ENCODE measurements at regions of chr11 and their contacts with region 1.

Region 1: GRCh38 chr11:13962562-13963168 is at the start of gene SPON1:
- ATAC-seq: peak in 7 of 8 experiments; percentile 38 to 92 (median 90)
- H3K4me3 ChIP-seq: peak within 1 kb of the TSS; percentile 31 to 41 (median 38)
- H3K27ac ChIP-seq: no peak within 1 kb of the TSS
- H3K4me1 ChIP-seq: peaks cover 7 to 19% of the 10 kb centered on the region in 2 donors
- total RNA-seq, gene SPON1: 0.41 to 294 (median 9.5) TPM

Region 2: DNA sequence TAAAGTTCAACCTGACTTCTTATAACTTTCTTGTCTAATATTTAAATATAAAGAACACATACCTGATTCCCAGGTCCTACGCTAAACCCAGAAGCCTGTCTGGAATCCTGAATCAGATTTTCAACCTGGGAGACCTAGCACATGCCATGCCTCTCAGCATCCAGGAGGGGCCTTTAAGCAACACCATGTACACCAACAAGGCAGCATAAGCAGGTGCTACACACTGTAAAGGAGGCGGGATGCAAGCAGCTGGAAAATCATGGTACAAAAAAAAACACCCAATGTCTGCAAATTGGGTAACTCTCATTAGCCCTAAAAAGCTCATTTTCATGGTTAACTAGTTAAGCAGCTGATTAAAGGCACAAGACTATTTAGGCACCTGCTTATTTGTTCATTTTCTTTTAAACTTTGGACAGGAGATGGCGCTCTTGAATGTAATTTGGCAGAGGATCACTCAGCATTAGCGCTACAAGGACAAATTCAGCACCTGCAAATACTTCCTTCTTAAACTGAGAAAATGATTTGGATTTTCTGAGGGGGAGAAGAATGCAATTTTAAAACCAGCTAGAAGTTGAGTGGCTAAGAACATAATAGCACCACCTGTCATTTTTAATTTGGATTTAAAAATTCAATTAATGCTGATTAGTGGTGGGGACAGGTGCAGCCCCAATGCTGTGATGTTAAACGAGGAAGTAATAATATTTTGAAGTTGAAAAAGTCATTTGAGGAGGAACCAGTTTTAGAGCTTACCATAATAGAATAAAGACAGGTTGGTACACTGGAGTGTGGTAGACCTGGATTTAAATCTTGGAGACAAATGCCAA is 190.2 kb before region 1 on chr11:
- in situ Hi-C with region 1: loop called in 1 of 9 experiments (anchors 10 kb)
- ATAC-seq: peak; percentile 60 to 79 (median 72)
- H3K4me3 ChIP-seq: no peak overlapping the region
- H3K27ac ChIP-seq: no peak overlapping the region
- H3K4me1 ChIP-seq: no peaks in the 10 kb centered on the region

Region 3: DNA sequence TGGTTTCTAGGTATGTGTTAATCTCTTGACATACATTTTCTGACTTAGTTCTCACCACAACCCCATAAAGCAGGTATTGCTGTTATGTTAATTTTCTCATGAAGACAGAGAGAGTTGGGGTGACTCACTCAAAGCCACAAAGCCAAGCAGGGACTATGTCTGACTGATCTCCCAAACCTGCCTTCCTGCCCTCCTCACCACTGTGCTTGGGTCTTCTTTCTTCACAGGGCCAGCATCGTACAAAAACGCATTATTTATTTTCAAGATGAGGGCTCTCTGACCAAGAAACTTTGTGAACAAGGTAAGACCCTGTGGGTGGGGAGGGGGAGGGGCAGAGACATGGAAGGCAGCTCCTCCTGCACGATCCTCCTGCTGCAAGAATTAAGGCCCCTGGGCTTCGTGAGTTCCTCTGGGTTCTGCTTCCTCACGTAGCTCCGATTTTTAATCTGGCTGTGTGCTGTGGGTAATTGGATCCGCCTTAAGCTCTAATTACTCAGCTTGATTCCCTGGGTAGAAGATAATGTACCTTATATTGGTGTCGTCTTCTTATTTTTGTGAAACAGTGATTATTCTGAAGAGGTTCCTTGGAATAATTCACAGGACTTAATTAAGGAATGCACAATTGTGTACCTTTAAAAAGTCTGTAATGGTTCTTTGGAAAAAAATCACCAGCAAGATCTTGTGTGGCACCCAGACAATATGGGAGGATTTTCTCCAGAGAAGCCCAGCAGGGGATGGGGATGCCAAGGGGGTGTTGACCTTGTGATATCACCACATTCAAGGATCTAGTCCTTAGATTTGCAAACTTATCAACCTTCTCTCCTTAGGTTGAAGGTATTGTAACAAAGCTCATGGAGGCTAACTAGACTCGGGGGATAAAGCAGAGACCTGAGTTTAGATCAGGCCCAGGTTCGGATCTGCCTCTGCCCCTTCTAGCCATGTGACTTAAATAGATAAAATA is 112.7 kb after region 1 on chr11:
- in situ Hi-C with region 1: no loop called
- ATAC-seq: peak in 1 of 8 experiments; percentile 28
- H3K4me3 ChIP-seq: no peak overlapping the region
- H3K27ac ChIP-seq: no peak overlapping the region
- H3K4me1 ChIP-seq: no peaks in the 10 kb centered on the region

Region 4: DNA sequence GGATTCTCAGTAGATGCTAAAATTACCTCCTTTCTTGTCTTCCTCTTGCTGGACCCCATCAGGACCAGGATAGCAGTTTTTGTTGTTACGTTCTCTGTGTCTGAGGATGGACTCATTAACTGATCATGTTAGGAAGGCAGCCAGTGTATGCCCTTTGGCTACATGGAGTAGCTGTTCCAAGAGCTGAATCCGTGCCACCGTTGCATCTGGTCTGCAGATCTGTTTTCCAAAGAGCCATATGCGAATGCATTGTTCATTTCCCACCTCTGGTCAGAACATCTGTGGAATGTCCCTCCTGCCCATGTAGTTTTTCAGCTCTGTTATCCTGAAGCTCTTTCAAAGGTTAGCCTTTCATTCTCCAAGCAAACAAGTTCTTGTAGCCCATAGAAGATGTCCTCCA is 188.2 kb after region 1 on chr11:
- in situ Hi-C with region 1: loop called in 1 of 9 experiments (anchors 5 kb)
- ATAC-seq: no peak
- H3K4me3 ChIP-seq: no peak overlapping the region
- H3K27ac ChIP-seq: no peak overlapping the region
- H3K4me1 ChIP-seq: no peaks in the 10 kb centered on the region

Region 5: GRCh38 chr11:14249121-14249963 is 286.7 kb after region 1 on chr11:
- in situ Hi-C with region 1: loop called in 6 of 9 experiments (anchors 10 to 25 kb)
- ATAC-seq: peak; percentile 64 to 91 (median 84)
- H3K4me3 ChIP-seq: no peak overlapping the region
- H3K27ac ChIP-seq: no peak overlapping the region
- H3K4me1 ChIP-seq: peaks cover 13 to 15% of the 10 kb centered on the region in 2 donors